Tibial artery (tissue), 4 donors: ENCODE measurements at regions of chr1 and their contacts with region 1.

Region 1: DNA sequence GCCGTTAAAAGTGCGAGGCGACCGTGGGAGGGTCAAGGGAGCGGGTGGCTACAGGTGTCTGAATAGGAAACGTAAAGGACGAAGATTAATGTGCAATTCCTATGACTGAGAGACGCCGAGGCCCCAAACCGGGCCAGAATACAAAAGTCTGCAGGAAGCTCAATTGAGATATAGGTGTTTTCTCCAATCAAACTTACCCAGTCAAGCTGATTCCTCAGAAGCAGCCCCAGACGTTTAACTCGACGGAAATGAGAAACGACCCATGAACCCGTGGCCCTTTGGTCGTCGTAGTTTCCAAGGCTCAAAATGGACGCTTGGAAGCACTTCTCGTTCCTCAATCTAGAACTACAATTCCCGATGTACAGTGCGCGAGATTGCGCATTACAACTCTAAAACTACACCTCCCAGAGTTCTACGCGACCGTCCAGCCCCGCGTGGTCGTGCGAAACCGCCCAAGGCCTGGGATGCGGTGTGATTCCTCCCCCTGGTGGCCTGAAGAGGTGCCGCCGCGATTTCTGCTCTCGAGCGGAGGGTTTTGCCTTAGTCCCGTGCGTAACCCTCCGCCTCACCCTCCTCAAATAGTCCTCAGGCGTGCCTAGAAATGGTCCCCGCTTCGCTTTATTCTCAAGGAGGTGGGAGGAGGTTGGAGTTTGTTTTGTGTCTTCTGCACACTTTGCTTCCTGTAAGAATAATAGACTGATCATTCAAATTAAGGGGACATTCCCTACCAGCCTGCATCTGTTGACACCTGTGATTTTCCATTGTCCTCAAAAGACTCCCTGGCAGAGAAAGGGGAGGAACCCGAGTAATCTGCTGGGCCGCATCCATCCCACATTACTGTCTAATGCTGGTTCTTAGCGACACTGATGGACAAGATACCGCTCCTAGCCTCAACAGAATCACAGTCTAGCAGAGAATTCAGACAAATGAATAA is at the start of gene PAFAH2:
- DNase-seq: peak; percentile 97 to 98
- H3K4me3 ChIP-seq: peak within 1 kb of the TSS; percentile 63 to 71
- H3K27ac ChIP-seq: peak within 1 kb of the TSS; percentile 79 to 81
- H3K4me1 ChIP-seq: peaks cover 0 to 20% (median 11%) of the 10 kb centered on the region in 4 donors
- H3K27me3 ChIP-seq: no peaks in the 10 kb centered on the region
- CTCF ChIP-seq: peak; percentile 92 to 100

Region 2: DNA sequence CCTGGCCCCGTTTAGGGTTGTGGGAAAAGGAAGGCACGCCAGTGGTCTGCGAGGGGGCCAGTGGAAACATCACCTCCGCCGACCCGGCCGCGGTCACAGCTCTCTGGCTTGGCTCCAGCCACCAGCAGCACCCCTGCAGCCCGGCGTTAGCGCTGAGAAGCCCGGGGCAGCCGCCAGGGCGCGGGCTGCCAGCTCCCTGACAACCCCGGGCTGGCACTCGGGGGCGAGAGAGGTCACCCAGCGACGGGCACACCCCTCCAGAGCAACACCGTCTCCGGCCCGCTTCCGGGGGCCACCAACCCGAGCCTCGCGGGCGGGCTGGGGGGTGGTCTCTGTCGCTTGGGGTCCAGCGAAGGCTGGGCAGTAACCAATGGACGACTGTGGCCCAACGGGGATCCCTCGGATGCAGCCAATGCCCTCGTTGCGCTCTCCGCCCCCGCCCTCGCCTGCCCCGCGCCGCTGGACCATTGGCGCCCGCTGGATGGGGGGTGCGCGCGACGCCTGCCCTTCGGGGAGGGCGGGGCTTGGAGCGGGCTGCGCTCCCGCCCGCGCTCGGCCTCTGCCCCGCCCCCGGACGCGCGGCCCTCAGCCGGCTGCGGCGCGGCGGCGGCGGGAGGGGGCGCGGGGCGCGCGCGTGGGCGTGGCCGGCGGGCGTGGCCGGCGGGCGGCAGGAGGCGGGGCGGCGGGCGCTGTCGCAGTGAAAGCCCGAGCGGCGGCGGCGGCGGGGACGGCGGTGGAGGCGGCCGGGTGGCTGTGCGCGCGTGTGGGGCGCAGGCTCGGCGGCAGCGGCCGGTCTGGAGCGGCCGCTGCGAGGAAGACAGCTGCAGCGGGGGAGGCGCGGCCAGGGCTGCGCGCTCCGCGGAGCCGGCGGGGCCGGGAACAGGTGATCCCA is 381.8 kb before region 1 on chr1 and contains the start of gene MAN1C1:
- intact Hi-C with region 1: loop called (anchors 10 kb)
- DNase-seq: peak; percentile 83 to 95
- H3K4me3 ChIP-seq: peak within 1 kb of the TSS; percentile 78 to 94
- H3K27ac ChIP-seq: peak within 1 kb of the TSS; percentile 82
- H3K4me1 ChIP-seq: peaks cover 0 to 48% (median 28%) of the 10 kb centered on the region in 4 donors
- H3K27me3 ChIP-seq: no peaks in the 10 kb centered on the region
- CTCF ChIP-seq: peak; percentile 45 to 63

Region 3: GRCh38 chr1:25819576-25820246 is 178.4 kb before region 1 on chr1 and contains the start of gene MTFR1L:
- intact Hi-C with region 1: loop called (anchors 5 kb)
- DNase-seq: peak; percentile 81 to 92
- H3K4me3 ChIP-seq: peak within 1 kb of the TSS; percentile 77 to 93
- H3K27ac ChIP-seq: peak within 1 kb of the TSS; percentile 83 to 92
- H3K4me1 ChIP-seq: peaks cover 0 to 33% (median 27%) of the 10 kb centered on the region in 4 donors
- H3K27me3 ChIP-seq: no peaks in the 10 kb centered on the region
- CTCF ChIP-seq: no peak

Region 4: DNA sequence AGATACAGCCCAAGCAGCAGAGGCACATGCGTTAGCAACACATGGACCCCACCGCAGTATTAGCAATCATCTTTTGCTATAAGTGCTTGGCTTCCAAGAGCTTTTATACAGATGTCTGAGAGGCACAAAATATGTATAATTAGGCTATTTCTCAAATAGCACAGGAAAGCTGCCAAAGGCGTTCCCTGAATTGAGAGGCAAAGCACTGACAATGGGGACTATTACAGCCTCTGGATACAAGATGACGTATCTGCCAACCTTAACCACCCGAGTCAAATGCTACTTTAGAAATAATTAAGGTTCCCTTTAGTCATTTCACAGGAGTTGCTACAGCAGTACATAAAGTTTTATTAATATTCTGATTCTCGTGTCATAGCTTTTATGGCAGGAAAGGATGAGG is 98.3 kb before region 1 on chr1:
- intact Hi-C with region 1: loop called (anchors 2 kb)
- DNase-seq: no peak
- H3K4me3 ChIP-seq: no peak overlapping the region
- H3K27ac ChIP-seq: no peak overlapping the region
- H3K4me1 ChIP-seq: peaks cover 0 to 18% (median 16%) of the 10 kb centered on the region in 4 donors
- H3K27me3 ChIP-seq: no peaks in the 10 kb centered on the region
- CTCF ChIP-seq: no peak

Region 5: DNA sequence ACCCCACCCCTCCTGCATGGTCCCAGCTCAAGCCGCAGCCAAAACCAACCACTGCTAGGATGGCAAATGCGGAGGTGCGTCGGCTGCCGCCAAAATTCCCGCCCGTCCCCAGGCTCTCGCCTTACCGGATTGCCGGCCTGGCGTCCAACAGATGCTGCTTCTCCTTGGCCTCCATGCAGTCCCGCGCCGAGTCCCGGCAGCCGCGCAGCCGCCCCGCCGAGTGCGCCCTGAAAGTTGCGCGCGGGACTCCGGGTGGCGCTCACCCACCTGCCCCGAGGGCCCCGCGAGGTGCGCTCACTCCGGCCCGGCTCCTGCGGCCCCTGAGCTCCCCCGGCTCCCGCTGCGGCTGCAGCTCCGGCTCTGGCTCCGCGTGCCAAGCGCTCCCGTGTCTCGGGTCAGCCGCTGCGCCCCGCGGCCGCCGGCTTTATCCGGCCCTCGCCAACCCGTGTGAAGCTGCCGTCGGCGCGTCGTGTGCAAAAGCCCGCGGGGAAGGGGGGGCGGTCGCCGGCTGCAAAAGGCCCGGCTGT is 47.7 kb after region 1 on chr1 and contains the start of gene SLC30A2:
- intact Hi-C with region 1: no loop called
- DNase-seq: no peak
- H3K4me3 ChIP-seq: no peak within 1 kb of the TSS
- H3K27ac ChIP-seq: no peak within 1 kb of the TSS
- H3K4me1 ChIP-seq: peaks cover 0 to 18% (median 12%) of the 10 kb centered on the region in 4 donors
- H3K27me3 ChIP-seq: peaks cover 3 to 71% of the 10 kb centered on the region in 2 donors
- CTCF ChIP-seq: no peak